ENCODE measurements at regions of chr16 and their contacts with region 1.

Region 1: DNA sequence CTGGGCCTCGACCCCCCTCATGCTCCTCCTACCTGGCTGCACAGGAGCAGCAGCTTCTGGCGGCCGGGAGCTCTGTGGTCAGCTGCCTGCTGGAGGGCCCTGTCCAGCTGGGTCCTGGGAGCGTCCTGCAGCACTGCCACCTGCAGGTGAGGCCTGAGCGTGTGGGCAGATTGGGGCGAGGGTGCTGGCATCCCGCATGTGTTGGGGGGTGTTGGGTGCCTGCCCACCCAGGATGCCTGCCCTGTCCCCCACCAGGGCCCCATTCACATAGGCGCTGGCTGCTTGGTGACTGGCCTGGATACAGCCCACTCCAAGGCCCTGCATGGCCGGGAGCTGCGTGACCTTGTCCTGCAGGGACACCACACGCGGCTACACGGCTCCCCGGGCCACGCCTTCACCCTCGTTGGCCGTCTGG is 16.5 kb downstream of the FCSK start:
- DNase-seq: no peak
- H3K4me3 Mint-ChIP-seq: no peak overlapping the region
- H3K27ac Mint-ChIP-seq: no peak overlapping the region
- H3K4me1 Mint-ChIP-seq: peaks cover 4% of the 10 kb centered on the region
- H3K27me3 Mint-ChIP-seq: no peaks in the 10 kb centered on the region

Region 2: GRCh38 chr16:70402916-70403659 is 67.8 kb before region 1 on chr16:
- CTCF ChIA-PET with region 1: no interaction called
- POLR2A ChIA-PET with region 1: no interaction called
- intact Hi-C with region 1: loop called (anchors 1 kb)
- DNase-seq: no peak
- H3K4me3 Mint-ChIP-seq: no peak overlapping the region
- H3K27ac Mint-ChIP-seq: peak overlapping the region; percentile 2
- H3K4me1 Mint-ChIP-seq: peaks cover 39% of the 10 kb centered on the region
- H3K27me3 Mint-ChIP-seq: no peaks in the 10 kb centered on the region

Region 3: DNA sequence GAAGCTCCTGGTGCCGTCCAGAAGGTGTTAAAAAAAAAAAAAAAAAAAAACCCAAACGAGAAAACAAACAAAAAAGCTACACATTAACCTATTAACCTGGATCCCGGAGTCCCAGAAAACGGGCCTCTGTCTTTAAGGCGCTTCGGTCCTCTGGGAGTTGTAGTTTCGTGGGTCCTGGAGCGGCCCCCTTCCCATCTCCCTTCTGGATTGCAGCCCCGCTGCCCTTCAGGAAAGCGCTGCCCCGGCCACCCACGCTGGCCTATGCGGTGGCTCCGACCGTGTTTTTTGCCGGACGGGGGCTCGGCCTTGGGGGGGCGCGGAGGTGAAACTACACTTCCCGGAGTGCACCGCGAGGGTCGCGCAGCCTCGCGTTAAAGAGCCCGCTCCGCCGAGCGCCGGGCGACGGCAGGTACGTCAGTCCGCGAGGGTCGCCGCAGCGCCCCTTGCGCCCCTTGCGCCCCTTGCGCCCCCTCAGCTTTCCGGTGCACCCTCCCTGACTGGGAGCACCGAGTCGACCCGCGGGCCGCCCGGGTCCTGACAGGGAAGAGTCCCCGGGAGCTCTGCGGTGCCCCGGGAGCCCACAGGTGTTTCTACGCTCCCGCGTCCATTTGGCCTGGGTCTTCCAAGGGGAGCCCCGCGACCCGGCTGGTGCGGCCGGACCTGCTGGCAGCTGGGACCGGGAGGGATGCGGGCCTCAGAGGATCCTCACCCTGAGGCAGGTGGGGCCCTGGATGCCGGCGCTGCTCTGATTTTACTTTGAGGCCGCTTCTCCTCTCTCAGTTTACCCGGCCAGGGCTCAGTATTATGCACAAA is 16.5 kb before region 1 on chr16 and contains the start of gene FCSK:
- CTCF ChIA-PET with region 1: no interaction called
- POLR2A ChIA-PET with region 1: interaction called, 4 read pairs
- intact Hi-C with region 1: loop called (anchors 1 kb)
- DNase-seq: peak; percentile 69
- H3K4me3 Mint-ChIP-seq: peak within 1 kb of the TSS; percentile 85
- H3K27ac Mint-ChIP-seq: peak within 1 kb of the TSS; percentile 67
- H3K4me1 Mint-ChIP-seq: peaks cover 12% of the 10 kb centered on the region
- H3K27me3 Mint-ChIP-seq: no peaks in the 10 kb centered on the region
- total RNA-seq, gene FCSK: 13.1 to 14.0 TPM

Region 4: DNA sequence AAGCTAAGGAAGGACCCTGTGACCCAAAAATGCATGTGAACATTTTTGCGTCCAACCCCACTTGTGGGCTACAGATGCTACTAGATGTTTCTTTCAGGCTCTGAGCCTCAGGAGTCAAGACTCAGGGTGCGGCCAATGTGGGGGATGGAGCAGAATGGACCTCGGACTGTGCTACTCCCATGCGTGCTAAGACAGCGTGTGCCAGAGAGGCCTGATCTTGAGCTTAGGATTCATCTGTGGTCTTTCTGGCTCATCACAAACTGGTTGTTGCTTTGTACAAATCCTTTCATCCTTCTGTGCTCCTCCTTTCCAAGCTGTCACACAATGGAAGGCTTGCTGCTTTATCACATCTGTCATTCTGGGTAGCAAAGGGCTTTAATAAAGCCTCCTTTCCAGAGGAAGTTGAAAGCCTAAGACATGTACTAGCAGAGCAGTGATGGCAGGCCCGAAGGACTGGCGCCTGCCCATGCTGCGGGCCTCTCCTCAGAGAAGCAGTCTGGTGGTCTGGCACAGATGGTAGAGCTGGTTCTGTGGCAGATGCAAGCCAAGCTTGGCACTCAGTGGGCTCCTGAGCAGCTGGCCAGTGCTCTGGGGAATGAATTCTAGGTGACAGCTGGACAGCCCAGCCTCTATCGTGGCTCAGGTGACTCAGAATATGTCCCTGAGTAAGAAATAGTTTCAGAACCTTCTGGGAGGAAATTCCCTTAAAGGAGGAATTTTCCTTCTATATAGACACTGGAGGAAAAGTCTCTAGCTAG is 24.7 kb after region 1 on chr16:
- CTCF ChIA-PET with region 1: interaction called, 3 read pairs
- POLR2A ChIA-PET with region 1: no interaction called
- intact Hi-C with region 1: loop called (anchors 1 kb)
- DNase-seq: no peak
- H3K4me3 Mint-ChIP-seq: no peak overlapping the region
- H3K27ac Mint-ChIP-seq: no peak overlapping the region
- H3K4me1 Mint-ChIP-seq: peaks cover 26% of the 10 kb centered on the region
- H3K27me3 Mint-ChIP-seq: no peaks in the 10 kb centered on the region